Colonic mucosa (tissue), 4 donors: ENCODE measurements at regions of chr1 and their contacts with region 1.

Region 1: DNA sequence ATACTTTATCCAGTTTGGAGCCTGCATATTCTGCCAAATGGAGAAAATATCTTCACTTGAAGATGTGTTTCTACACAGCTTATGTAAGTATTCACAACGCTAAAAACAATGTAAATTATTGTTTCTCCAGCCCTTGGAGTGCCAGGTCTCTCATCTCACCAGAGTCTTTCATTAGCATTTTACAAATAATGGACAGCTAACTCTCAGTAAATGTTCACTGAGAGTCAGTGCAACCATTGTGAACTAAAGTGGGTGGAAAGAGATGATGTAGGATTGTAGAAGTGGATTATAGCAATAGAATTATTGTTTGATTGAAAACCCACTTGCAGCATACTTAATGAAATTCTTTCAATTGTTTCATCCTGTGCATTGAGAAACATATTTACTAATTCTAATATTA is 8.3 kb upstream of the FAM177B start:
- DNase-seq: no peak
- H3K4me3 ChIP-seq: no peak overlapping the region
- H3K27ac ChIP-seq: no peak overlapping the region
- H3K4me1 ChIP-seq: no peaks in the 10 kb centered on the region
- H3K27me3 ChIP-seq: no peaks in the 10 kb centered on the region
- CTCF ChIP-seq: no peak

Region 2: DNA sequence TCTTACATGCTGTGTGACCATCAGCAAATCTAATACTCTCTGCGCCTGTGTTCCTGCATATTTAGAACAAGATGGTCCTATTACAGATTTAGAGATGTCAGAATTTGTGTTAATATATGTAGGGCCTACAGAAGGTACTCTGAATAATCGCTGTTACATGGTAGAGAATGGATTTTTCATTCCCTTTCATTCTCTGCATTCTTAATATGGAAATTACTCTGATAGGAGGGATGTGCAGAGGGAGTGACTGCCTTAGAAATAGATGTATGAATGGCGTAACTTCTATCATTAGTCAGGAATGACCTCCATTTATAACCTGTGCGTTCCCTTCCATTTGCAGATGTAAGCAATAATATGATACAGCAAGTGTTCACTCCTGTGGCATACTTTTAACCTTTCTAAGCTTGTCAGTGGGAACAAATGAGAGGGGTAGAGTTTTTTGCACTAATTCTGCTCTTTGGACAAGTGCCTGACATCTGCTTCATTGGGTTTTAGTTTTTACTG is 65.3 kb before region 1 on chr1:
- intact Hi-C with region 1: loop called (anchors 5 kb)
- DNase-seq: no peak
- H3K4me3 ChIP-seq: no peak overlapping the region
- H3K27ac ChIP-seq: no peak overlapping the region
- H3K4me1 ChIP-seq: no peaks in the 10 kb centered on the region
- H3K27me3 ChIP-seq: no peaks in the 10 kb centered on the region
- CTCF ChIP-seq: no peak